Posterior vena cava (tissue), 2 donors: ENCODE measurements at regions of chr6 and their contacts with region 1.

Region 1: GRCh38 chr6:134174672-134175198 is 122.3 kb upstream of the SLC2A12 start:
- DNase-seq: peak; percentile 98

Region 2: GRCh38 chr6:134640975-134641429 is 466.3 kb after region 1 on chr6:
- intact Hi-C with region 1: loop called (anchors 5 to 10 kb)
- DNase-seq: peak; percentile 92

Region 3: DNA sequence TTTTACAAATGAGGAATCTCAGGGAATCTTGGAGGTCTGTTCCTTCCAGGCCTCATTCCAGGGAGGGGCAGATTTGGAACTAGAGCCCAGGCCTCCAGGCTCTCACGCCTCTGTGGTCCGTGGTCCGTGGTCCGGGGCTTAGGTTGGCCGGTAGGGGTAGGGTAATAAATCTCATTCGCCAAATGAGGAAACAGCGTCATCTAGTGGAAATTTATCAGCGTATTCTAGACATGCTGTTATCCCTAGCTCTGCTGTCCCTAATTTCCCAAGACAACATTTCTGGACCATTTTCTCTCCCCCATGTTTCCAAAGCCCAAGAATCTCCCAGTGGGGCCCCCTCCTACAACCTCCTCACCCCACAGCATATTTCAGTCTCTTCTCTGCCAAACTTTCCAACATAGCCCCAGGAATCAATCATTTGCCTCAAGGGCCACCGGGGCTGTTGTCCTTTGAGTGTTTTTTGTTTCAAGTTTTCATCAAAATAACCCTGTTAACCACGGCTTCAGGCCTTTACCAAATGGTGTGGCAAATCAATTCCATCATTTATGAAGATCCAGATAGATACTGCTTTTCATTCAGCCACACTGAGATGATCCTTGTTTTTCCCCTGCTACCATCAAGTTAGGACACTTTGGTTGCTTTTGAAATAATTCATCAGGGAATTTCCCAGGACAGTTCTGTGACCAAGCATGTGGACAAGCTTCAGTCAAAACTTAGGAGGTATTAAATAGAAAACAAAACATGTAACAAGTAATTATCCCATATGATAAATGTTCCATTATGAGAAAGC is 648.4 kb after region 1 on chr6:
- intact Hi-C with region 1: loop called in 1 of 2 experiments (anchors 5 kb)
- DNase-seq: no peak